ENCODE measurements at regions of chr19 and their contacts with region 1.

Region 1: DNA sequence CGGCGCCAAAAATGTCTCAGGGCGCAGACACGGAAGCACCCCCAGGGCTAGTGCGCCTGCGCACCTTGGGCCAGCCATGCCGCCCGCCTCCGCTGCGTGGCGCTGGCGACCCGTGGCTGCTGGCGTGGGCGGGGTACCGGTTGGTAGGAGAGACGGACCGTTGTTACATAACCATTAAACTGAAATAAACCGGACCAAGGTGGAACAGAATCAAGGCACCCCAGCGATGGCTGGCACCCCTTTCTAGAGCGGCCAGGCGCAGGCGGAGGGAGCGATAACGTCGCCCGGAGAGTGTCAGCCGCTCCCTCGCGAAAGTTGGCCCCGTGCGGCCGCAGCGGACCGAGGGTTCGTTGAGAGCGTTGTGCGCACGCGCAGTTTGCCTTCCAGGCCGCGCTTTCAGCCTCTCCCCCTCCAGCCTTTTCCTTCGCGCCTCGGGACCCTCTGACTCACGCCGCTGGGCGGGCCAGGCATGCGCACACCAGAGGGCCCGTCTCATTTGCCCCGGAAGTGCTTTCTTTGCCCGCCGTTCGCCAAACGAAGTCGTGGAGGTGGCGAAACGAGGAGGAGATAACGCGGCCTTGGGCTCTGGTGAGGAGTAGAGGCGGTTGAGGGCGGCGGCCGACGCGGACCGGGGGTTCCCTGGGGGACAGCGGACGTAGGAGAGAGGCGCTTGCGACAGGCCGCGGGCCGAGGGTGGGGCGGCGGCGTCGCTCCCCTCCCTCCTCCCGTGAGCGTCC is at the starts of genes PLEKHJ1 and SF3A2:
- DNase-seq: peak; percentile 93
- ATAC-seq: peak; percentile 83
- H3K4me3 ChIP-seq: peak within 1 kb of the TSS; percentile 99
- H3K27ac ChIP-seq: peak within 1 kb of the TSS; percentile 94
- H3K4me1 ChIP-seq: peaks cover 24% of the 10 kb centered on the region
- H3K27me3 ChIP-seq: no peaks in the 10 kb centered on the region
- CTCF ChIP-seq: peak; percentile 99 to 100 (median 99); a peak in 5 of 6 replicates
- EP300 ChIP-seq: no peak
- POLR2A ChIP-seq: peak; percentile 93
- RAD21 ChIP-seq: peak; percentile 94
- polyA plus RNA-seq, gene PLEKHJ1: 1.3 to 6.9 TPM
- polyA plus RNA-seq, gene SF3A2: 0.33 to 0.55 TPM

Region 2: GRCh38 chr19:2151339-2152229 is 84.9 kb before region 1 on chr19 and contains the start of gene AP3D1:
- CTCF ChIA-PET with region 1: interaction called, 35 read pairs
- POLR2A ChIA-PET with region 1: interaction called, 3 read pairs
- RAD21 ChIA-PET with region 1: interaction called, 39 read pairs
- SMC1A ChIA-PET with region 1: interaction called, 10 read pairs
- in situ Hi-C with region 1: no loop called
- intact Hi-C with region 1: loop called (anchors 2 kb)
- DNase-seq: peak; percentile 98
- ATAC-seq: peak; percentile 89
- H3K4me3 ChIP-seq: peak within 1 kb of the TSS; percentile 96
- H3K27ac ChIP-seq: peak within 1 kb of the TSS; percentile 91
- H3K4me1 ChIP-seq: peaks cover 20% of the 10 kb centered on the region
- H3K27me3 ChIP-seq: no peaks in the 10 kb centered on the region
- CTCF ChIP-seq: no peak
- EP300 ChIP-seq: no peak
- POLR2A ChIP-seq: peak; percentile 82
- RAD21 ChIP-seq: no peak
- polyA plus RNA-seq, gene AP3D1: 1.5 to 3.0 TPM

Region 3: GRCh38 chr19:2168619-2169424 is 67.7 kb before region 1 on chr19:
- CTCF ChIA-PET with region 1: interaction called, 11 read pairs
- POLR2A ChIA-PET with region 1: interaction called, 5 read pairs
- RAD21 ChIA-PET with region 1: interaction called, 18 read pairs
- SMC1A ChIA-PET with region 1: interaction called, 19 read pairs
- in situ Hi-C with region 1: no loop called
- intact Hi-C with region 1: no loop called
- DNase-seq: peak; percentile 92
- ATAC-seq: peak; percentile 70
- H3K4me3 ChIP-seq: peak overlapping the region; percentile 92; the same call in 1 of the 2 replicates
- H3K27ac ChIP-seq: peak overlapping the region; percentile 74
- H3K4me1 ChIP-seq: peaks cover 49% of the 10 kb centered on the region
- H3K27me3 ChIP-seq: no peaks in the 10 kb centered on the region
- CTCF ChIP-seq: 0 out of 6 replicates have a peak, but pooled peaks of 1 of the 3 experiments have one; percentile 14
- EP300 ChIP-seq: peak; percentile 52 to 75; a peak in 2 of 4 replicates
- POLR2A ChIP-seq: peak; percentile 59; the same call in 1 of the 2 replicates
- RAD21 ChIP-seq: no peak

Region 4: DNA sequence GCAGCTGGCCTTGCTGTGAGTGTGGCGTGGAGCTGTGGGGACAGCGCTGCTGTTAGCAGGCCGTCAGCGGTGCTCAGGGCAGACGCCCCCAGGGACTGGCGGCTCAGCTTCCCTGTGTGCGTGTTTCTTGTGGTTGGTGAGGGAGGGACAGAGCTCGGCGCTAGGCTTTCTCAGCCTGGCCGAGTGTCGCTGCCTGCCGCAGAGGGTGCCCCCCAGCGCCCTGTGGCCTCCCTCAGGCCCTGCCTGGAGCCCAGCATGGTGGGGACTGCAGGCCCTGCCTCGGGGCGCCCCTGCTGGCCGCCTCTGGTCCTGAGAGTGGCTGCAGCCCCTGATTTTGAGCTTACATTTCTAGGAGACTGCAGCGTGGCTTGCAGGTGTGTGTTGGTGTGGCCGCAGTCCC is 37.3 kb before region 1 on chr19:
- CTCF ChIA-PET with region 1: no interaction called
- POLR2A ChIA-PET with region 1: no interaction called
- RAD21 ChIA-PET with region 1: no interaction called
- SMC1A ChIA-PET with region 1: no interaction called
- in situ Hi-C with region 1: no loop called
- intact Hi-C with region 1: no loop called
- DNase-seq: no peak
- ATAC-seq: peak; percentile 88
- H3K4me3 ChIP-seq: no peak overlapping the region
- H3K27ac ChIP-seq: no peak overlapping the region
- H3K4me1 ChIP-seq: no peaks in the 10 kb centered on the region
- H3K27me3 ChIP-seq: no peaks in the 10 kb centered on the region
- CTCF ChIP-seq: peak; percentile 29 to 59 (median 35); a peak in 5 of 6 replicates
- EP300 ChIP-seq: no peak
- POLR2A ChIP-seq: no peak
- RAD21 ChIP-seq: peak; percentile 29; the same call in 1 of the 2 replicates

Region 5: GRCh38 chr19:2215281-2215751 is 21.2 kb before region 1 on chr19:
- CTCF ChIA-PET with region 1: no interaction called
- POLR2A ChIA-PET with region 1: no interaction called
- RAD21 ChIA-PET with region 1: no interaction called
- SMC1A ChIA-PET with region 1: no interaction called
- in situ Hi-C with region 1: no loop called
- intact Hi-C with region 1: no loop called
- DNase-seq: no peak
- ATAC-seq: no peak
- H3K4me3 ChIP-seq: no peak overlapping the region
- H3K27ac ChIP-seq: no peak overlapping the region
- H3K4me1 ChIP-seq: peaks cover 5% of the 10 kb centered on the region
- H3K27me3 ChIP-seq: no peaks in the 10 kb centered on the region
- CTCF ChIP-seq: no peak
- EP300 ChIP-seq: no peak
- POLR2A ChIP-seq: no peak
- RAD21 ChIP-seq: no peak

Region 6: DNA sequence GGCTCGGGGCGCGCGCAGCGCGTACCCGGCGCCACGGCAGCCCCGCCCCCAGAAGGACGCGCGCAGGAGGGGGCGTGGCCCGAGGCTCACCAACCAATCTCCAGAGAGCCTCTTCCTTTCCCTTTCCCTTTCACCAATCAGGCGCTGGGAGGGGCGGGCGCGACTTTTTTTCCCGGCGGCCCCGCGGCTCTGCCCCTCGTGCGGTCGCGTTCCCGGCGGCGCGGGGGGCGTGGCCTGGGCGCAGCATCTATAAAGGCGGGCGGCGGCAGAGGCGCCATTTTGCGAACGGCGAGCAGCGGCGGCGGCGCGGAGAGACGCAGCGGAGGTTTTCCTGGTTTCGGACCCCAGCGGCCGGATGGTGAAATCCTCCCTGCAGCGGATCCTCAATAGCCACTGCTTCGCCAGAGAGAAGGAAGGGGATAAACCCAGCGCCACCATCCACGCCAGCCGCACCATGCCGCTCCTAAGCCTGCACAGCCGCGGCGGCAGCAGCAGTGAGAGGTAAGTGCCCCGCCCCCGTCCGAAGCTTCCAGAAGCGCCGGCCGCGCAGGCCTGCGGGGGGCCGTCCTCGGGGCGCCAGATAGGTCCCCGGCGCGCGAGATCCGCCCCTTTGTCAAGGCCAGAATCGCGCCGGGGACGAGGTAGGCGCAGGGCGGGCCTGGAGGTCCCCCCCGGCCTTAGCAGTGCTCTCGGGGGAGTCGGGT is 32.9 kb after region 1 on chr19:
- CTCF ChIA-PET with region 1: interaction called, 46 read pairs
- POLR2A ChIA-PET with region 1: interaction called, 36 read pairs
- RAD21 ChIA-PET with region 1: interaction called, 44 read pairs
- SMC1A ChIA-PET with region 1: interaction called, 46 read pairs
- in situ Hi-C with region 1: loop called (anchors 5 kb)
- intact Hi-C with region 1: loop called (anchors 1 kb)
- DNase-seq: peak; percentile 66
- ATAC-seq: peak; percentile 61
- H3K4me3 ChIP-seq: peak overlapping the region; percentile 95
- H3K27ac ChIP-seq: peak overlapping the region; percentile 89
- H3K4me1 ChIP-seq: peaks cover 20% of the 10 kb centered on the region
- H3K27me3 ChIP-seq: no peaks in the 10 kb centered on the region
- CTCF ChIP-seq: peak; percentile 5 to 9 (median 9); a peak in 1 of 6 replicates
- EP300 ChIP-seq: no peak
- POLR2A ChIP-seq: peak; percentile 100
- RAD21 ChIP-seq: no peak

Region 7: GRCh38 chr19:2328401-2329148 is 92.1 kb after region 1 on chr19 and contains the starts of genes LSM7 and SPPL2B:
- CTCF ChIA-PET with region 1: no interaction called
- POLR2A ChIA-PET with region 1: interaction called, 6 read pairs
- RAD21 ChIA-PET with region 1: interaction called, 5 read pairs
- SMC1A ChIA-PET with region 1: interaction called, 4 read pairs
- in situ Hi-C with region 1: no loop called
- intact Hi-C with region 1: loop called (anchors 5 kb)
- DNase-seq: peak; percentile 64
- ATAC-seq: peak; percentile 66
- H3K4me3 ChIP-seq: peak within 1 kb of the TSS; percentile 90
- H3K27ac ChIP-seq: peak within 1 kb of the TSS; percentile 76
- H3K4me1 ChIP-seq: peaks cover 35% of the 10 kb centered on the region
- H3K27me3 ChIP-seq: no peaks in the 10 kb centered on the region
- CTCF ChIP-seq: no peak
- EP300 ChIP-seq: no peak
- POLR2A ChIP-seq: peak; percentile 90
- RAD21 ChIP-seq: no peak
- polyA plus RNA-seq, gene LSM7: 24.4 to 108 TPM
- polyA plus RNA-seq, gene SPPL2B: 0.29 to 0.40 TPM